Mammary epithelial cell (primary cell): ENCODE measurements at regions of chr10 and their contacts with region 1.

Region 1: GRCh38 chr10:79463578-79464496 is 18.4 kb upstream of the ZCCHC24 start:
- DNase-seq: no peak
- H3K4me3 ChIP-seq: no peak overlapping the region
- H3K27ac ChIP-seq: no peak overlapping the region
- H3K4me1 ChIP-seq: no peaks in the 10 kb centered on the region
- H3K27me3 ChIP-seq: no peaks in the 10 kb centered on the region
- CTCF ChIP-seq: no peak

Region 2: DNA sequence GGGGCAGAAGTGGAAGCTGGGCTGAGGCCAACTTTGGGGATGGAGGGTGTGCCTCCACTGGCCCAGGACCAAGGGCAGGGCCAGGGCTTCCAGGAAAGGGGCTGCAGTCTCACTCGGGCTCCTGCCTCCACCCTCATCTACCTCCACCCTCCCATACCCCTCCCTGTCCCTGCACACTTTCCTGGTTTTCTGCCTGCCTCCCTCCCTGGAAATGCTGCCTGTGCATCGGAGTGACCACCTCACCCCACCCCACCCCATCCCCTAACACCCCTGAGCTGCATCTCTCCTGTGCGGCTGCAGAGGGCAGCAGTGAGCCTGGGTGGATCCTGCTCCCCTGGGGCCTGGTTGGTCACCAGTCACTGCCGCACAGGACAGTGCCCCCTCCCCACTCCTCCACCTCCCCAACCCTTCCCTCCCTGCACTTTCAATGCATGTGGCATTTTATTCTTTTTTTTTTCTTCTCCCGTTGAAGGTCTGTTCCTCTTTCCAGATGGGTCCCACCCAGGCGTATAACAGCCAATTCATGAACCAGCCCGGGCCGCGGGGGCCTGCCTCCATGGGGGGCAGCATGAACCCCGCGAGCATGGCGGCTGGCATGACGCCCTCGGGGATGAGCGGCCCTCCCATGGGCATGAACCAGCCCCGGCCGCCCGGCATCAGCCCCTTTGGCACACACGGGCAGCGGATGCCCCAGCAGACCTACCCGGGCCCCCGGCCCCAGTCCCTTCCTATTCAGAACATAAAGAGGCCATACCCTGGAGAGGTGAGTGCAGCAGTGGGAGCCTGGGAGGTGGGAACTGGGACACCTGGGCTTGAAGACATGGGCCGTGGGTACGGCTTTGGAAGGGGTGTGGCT is 170.7 kb before region 1 on chr10:
- CTCF ChIA-PET with region 1: no interaction called
- dilution Hi-C with region 1: no loop called
- in situ Hi-C with region 1: no loop called
- intact Hi-C with region 1: loop called (anchors 1 kb)
- DNase-seq: no peak
- H3K4me3 ChIP-seq: no peak overlapping the region
- H3K27ac ChIP-seq: no peak overlapping the region
- H3K4me1 ChIP-seq: peaks cover 22% of the 10 kb centered on the region
- H3K27me3 ChIP-seq: no peaks in the 10 kb centered on the region
- CTCF ChIP-seq: peak; percentile 24 to 69

Region 3: DNA sequence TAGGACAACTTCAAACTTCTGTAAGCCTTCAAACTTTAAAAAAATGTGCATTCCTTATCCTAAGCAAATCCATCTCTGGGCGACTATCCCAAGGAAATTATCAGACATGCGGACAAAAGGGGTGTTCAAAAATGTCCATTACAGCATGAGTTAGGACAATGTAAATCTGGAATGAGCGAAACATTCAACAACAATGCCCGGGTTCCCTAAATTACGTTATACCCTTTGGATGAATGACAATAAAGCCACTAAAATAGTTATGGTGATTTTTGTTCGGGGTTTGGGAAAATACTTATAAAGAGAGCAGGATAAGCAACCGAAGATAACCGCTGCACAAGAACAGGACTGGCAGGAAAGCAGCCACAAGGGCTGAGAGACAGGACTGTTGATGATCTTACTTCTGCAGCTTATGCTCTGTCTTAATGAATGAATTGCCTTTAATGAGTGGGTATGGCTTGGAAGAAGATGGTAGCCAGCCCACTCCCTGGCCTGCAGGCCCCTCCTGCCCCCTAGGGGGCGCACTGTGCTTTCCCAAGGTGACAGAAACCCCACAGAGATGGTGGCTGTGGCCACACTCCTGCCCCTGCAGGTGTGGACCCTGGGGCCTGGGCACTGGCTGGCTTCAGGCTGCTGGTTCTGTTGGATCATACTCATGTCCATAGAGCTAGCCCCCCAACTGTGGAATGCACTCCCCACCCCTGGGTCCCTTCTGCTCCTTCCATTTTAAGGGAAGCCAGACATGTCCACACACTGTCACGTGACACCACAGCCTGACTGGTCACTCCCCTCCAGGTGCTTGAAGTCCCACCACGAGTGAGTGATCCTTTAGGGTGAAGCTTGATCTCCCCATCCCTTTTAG is 63.5 kb before region 1 on chr10:
- CTCF ChIA-PET with region 1: no interaction called
- dilution Hi-C with region 1: loop called (anchors 5 kb)
- in situ Hi-C with region 1: no loop called
- intact Hi-C with region 1: loop called (anchors 1 kb)
- DNase-seq: no peak
- H3K4me3 ChIP-seq: no peak overlapping the region
- H3K27ac ChIP-seq: no peak overlapping the region
- H3K4me1 ChIP-seq: peaks cover 28% of the 10 kb centered on the region
- H3K27me3 ChIP-seq: no peaks in the 10 kb centered on the region
- CTCF ChIP-seq: peak; percentile 70 to 78

Region 4: DNA sequence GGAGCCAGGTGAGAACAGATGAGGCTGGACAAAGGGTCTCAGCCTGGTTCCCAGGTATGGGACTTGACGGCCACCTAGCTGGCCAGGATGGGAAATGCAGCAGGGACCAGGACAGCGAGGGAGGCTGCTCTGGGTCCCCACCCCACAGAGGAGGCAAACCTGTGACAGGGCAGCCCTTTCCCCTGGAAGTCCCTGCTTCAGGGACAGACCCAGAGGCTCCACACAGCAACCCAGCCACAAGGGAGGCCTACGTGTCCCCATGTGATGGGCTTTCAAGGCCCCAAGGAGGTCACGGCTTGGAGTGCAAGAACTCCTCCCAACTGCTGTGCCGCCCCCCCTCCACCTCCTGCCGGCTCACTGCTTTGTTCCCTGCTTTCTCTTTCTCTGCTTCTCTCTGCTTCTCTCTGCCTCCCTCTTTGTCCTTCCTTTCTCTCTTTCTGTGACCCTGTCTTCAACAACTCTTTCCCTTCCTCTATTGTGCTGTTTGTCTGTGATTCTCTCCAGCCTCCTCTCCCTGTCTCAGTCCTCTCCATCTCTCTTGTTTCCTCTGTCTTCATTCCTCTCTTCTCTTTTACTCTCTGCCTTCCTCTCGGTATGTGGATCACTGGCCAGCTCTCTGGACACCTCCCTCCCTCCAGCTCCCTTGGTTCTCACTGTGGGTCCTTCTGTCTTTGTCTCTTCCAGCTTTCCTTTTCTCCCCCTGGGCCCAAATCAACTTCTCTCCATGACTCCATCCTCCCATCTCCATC is 38.9 kb after region 1 on chr10:
- CTCF ChIA-PET with region 1: no interaction called
- dilution Hi-C with region 1: no loop called
- in situ Hi-C with region 1: no loop called
- intact Hi-C with region 1: loop called (anchors 2 kb)
- DNase-seq: peak; percentile 23
- H3K4me3 ChIP-seq: no peak overlapping the region
- H3K27ac ChIP-seq: no peak overlapping the region
- H3K4me1 ChIP-seq: no peaks in the 10 kb centered on the region
- H3K27me3 ChIP-seq: no peaks in the 10 kb centered on the region
- CTCF ChIP-seq: peak; percentile 29 to 64

Region 5: GRCh38 chr10:79628988-79629954 is 165.4 kb after region 1 on chr10:
- CTCF ChIA-PET with region 1: no interaction called
- dilution Hi-C with region 1: no loop called
- in situ Hi-C with region 1: no loop called
- intact Hi-C with region 1: no loop called
- DNase-seq: no peak
- H3K4me3 ChIP-seq: no peak overlapping the region
- H3K27ac ChIP-seq: no peak overlapping the region
- H3K4me1 ChIP-seq: no peaks in the 10 kb centered on the region
- H3K27me3 ChIP-seq: peaks cover 4% of the 10 kb centered on the region
- CTCF ChIP-seq: no peak